ENCODE measurements at regions of chrX and their contacts with region 1.

Region 1: GRCh38 chrX:154717824-154718223 is 33.1 kb downstream of the GAB3 start:
- DNase-seq: no peak
- H3K4me3 ChIP-seq: no peak overlapping the region
- CTCF ChIP-seq: no peak
- POLR2A ChIP-seq: no peak

Region 2: DNA sequence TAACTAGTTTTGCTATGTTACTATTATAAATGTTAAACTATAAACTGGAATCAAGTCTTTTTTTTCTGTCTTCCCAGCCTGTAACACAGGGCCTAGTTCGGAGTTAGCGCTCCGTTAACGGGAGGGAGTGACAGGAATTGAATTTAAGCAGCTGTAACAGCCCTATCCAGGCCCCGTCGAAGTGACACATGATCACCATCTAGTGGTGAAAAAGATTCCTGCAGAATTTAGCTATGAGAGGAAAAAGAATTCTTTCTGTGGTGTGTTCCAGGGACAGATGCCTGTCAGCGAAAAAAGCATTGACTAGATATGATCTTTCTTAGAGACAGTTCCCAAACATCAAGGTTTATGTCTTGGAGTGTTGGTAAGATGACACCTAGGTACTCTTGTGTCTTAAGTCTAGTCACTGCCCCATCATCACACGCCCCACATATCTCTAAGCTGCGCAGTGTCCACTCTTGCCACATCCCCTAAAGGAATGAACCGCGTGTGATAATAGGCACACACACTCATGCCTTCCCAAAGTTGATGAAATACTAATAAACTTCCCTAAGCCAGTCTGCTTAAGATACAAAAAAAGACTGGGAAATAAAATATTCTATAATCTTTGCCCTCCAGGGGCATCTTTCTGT is 31.0 kb after region 1 on chrX:
- intact Hi-C with region 1: loop called (anchors 2 kb)
- DNase-seq: peak in 1 of 2 donors; percentile 24
- H3K4me3 ChIP-seq: no peak overlapping the region
- CTCF ChIP-seq: no peak
- POLR2A ChIP-seq: no peak